MCF 10A (cell line): ENCODE measurements at regions of chr20 and their contacts with region 1.

Region 1: GRCh38 chr20:63641792-63642544 is 11.3 kb downstream of the STMN3 start:
- DNase-seq: peak; percentile 82
- H3K4me3 Mint-ChIP-seq: peak overlapping the region; percentile 74
- H3K27ac Mint-ChIP-seq: no peak overlapping the region
- H3K4me1 Mint-ChIP-seq: peaks cover 6% of the 10 kb centered on the region
- H3K27me3 Mint-ChIP-seq: no peaks in the 10 kb centered on the region
- CTCF ChIP-seq: peak; percentile 39

Region 2: DNA sequence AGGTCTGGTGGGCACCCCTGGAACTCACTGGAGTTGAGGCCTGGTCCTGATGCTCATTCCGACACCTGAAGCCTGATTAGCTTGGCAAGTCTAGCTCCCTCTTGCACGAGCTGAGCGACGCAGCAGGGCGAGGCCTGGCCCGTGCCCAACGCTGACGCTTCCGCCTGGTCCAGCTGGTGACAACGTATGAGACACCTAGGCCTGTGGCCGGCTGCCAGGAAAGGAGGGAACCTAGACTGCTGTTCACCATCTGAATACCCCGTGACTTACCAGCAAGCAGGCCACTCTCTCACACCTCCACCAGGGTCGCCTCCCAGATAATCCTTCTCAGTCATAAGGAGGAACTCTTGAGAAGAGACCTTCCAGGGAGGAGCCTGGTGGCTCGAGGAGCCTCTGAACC is 450.6 kb before region 1 on chr20:
- CTCF ChIA-PET with region 1: no interaction called
- POLR2A ChIA-PET with region 1: no interaction called
- intact Hi-C with region 1: no loop called
- DNase-seq: peak; percentile 92
- H3K4me3 Mint-ChIP-seq: no peak overlapping the region
- H3K27ac Mint-ChIP-seq: peak overlapping the region; percentile 54
- H3K4me1 Mint-ChIP-seq: peaks cover 16% of the 10 kb centered on the region
- H3K27me3 Mint-ChIP-seq: no peaks in the 10 kb centered on the region
- CTCF ChIP-seq: no peak

Region 3: DNA sequence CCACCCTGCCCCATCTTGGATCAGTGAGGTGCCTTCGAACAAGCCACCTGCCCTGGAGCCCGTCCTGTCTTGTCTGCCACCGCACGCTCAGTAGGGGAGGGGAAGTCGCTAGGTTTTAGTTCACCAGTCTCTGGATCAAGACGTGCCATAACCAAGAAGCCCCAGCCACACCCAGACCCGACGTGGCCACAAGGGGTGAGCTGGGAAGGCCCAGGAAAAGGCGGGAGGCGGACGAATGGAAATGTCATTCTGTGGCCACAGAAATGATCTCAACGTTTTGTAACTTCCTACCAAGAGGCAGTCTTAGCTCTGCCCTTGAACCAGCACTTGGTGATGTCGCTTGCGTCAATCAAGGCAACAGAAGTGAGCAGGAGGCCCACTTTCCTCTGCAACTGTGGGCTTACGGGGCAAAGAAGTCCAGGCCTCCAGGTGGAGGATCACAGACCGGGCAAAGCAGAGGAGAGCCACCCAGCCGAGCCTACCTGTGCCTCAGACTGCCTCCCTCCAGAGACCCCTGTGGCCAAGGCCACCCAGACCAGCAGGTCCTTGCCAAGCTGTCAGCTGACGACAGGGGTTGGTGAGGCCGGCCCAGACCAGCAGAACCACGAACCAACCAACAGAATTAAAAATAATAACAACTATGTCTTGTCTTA is 29.6 kb before region 1 on chr20:
- CTCF ChIA-PET with region 1: no interaction called
- POLR2A ChIA-PET with region 1: no interaction called
- intact Hi-C with region 1: no loop called
- DNase-seq: no peak
- H3K4me3 Mint-ChIP-seq: no peak overlapping the region
- H3K27ac Mint-ChIP-seq: no peak overlapping the region
- H3K4me1 Mint-ChIP-seq: no peaks in the 10 kb centered on the region
- H3K27me3 Mint-ChIP-seq: no peaks in the 10 kb centered on the region
- CTCF ChIP-seq: no peak

Region 4: GRCh38 chr20:63686492-63687321 is 44.7 kb after region 1 on chr20:
- CTCF ChIA-PET with region 1: no interaction called
- POLR2A ChIA-PET with region 1: interaction called, 12 read pairs
- intact Hi-C with region 1: no loop called
- DNase-seq: peak; percentile 85
- H3K4me3 Mint-ChIP-seq: no peak overlapping the region
- H3K27ac Mint-ChIP-seq: no peak overlapping the region
- H3K4me1 Mint-ChIP-seq: peaks cover 12% of the 10 kb centered on the region
- H3K27me3 Mint-ChIP-seq: no peaks in the 10 kb centered on the region
- CTCF ChIP-seq: no peak